CD4-positive, alpha-beta memory T cell (primary cell): ENCODE measurements at regions of chr5 and their contacts with region 1.

Region 1: DNA sequence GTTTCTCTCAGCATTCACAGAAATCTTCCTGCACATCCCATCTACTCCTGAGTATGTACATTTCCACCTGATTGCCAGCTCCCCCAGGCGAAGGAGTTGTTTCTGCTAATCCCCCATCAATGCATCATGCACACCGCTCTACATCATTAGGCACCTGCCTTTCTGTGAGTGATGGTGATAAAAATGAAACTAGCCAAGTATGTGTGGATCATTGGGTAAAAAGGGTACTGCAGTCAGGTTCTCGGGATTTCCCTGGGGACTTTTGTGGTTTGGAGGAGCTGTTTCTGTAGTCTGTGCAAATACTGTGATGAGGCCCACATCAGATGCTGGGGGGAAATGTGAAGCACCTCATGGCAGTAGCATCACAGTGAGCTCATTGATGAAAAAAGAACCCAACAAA is 30.4 kb downstream of the CAMK4 start:
- DNase-seq: peak; percentile 47 to 94 (median 58)
- H3K4me3 ChIP-seq: no peak overlapping the region
- H3K4me3 Mint-ChIP-seq: peak overlapping the region in 7 of 8 donors; percentile 71 to 84 (median 77)
- H3K27ac ChIP-seq: peak overlapping the region; percentile 78
- H3K27ac Mint-ChIP-seq: peak overlapping the region; percentile 82 to 93 (median 88)
- H3K4me1 ChIP-seq: peaks cover 74% of the 10 kb centered on the region
- H3K4me1 Mint-ChIP-seq: peaks cover 61 to 71% (median 70%) of the 10 kb centered on the region in 4 donors
- H3K27me3 ChIP-seq: no peaks in the 10 kb centered on the region
- H3K27me3 Mint-ChIP-seq: no peaks in the 10 kb centered on the region

Region 2: GRCh38 chr5:111229871-111230810 is 24.5 kb before region 1 on chr5:
- CTCF ChIA-PET with region 1: interaction called, 16 read pairs
- POLR2A ChIA-PET with region 1: interaction called, 75 read pairs
- intact Hi-C with region 1: no loop called
- DNase-seq: peak in 4 of 5 donors; percentile 69 to 80 (median 74)
- H3K4me3 ChIP-seq: peak overlapping the region in 1 of 2 donors; percentile 25
- H3K4me3 Mint-ChIP-seq: peak overlapping the region; percentile 77 to 94 (median 84)
- H3K27ac ChIP-seq: peak overlapping the region; percentile 82
- H3K27ac Mint-ChIP-seq: peak overlapping the region; percentile 83 to 98 (median 95)
- H3K4me1 ChIP-seq: peaks cover 84% of the 10 kb centered on the region
- H3K4me1 Mint-ChIP-seq: peaks cover 59 to 94% (median 74%) of the 10 kb centered on the region in 4 donors
- H3K27me3 ChIP-seq: no peaks in the 10 kb centered on the region
- H3K27me3 Mint-ChIP-seq: no peaks in the 10 kb centered on the region

Region 3: GRCh38 chr5:111237470-111237869 is 17.1 kb before region 1 on chr5:
- CTCF ChIA-PET with region 1: interaction called, 4 read pairs
- POLR2A ChIA-PET with region 1: interaction called, 5 read pairs
- intact Hi-C with region 1: loop called (anchors 2 kb)
- DNase-seq: peak in 1 of 5 donors; percentile 15
- H3K4me3 ChIP-seq: no peak overlapping the region
- H3K4me3 Mint-ChIP-seq: peak overlapping the region; percentile 62 to 89 (median 78)
- H3K27ac ChIP-seq: peak overlapping the region; percentile 54
- H3K27ac Mint-ChIP-seq: peak overlapping the region; percentile 76 to 96 (median 91)
- H3K4me1 ChIP-seq: peaks cover 94% of the 10 kb centered on the region
- H3K4me1 Mint-ChIP-seq: peaks cover 78 to 95% (median 89%) of the 10 kb centered on the region in 4 donors
- H3K27me3 ChIP-seq: no peaks in the 10 kb centered on the region
- H3K27me3 Mint-ChIP-seq: no peaks in the 10 kb centered on the region

Region 4: GRCh38 chr5:111271885-111272284 is 17.3 kb after region 1 on chr5:
- CTCF ChIA-PET with region 1: no interaction called
- POLR2A ChIA-PET with region 1: interaction called, 4 read pairs
- intact Hi-C with region 1: loop called (anchors 2 kb)
- DNase-seq: no peak
- H3K4me3 ChIP-seq: no peak overlapping the region
- H3K4me3 Mint-ChIP-seq: peak overlapping the region in 1 of 8 donors; percentile 35
- H3K27ac ChIP-seq: no peak overlapping the region
- H3K27ac Mint-ChIP-seq: peak overlapping the region in 5 of 7 donors; percentile 18 to 62 (median 50)
- H3K4me1 ChIP-seq: peaks cover 52% of the 10 kb centered on the region
- H3K4me1 Mint-ChIP-seq: peaks cover 46 to 73% (median 67%) of the 10 kb centered on the region in 4 donors
- H3K27me3 ChIP-seq: no peaks in the 10 kb centered on the region
- H3K27me3 Mint-ChIP-seq: no peaks in the 10 kb centered on the region